ENCODE measurements at regions of chr17 and their contacts with region 1.

Region 1: GRCh38 chr17:60599620-60600489 is at the start of gene PPM1D:
- DNase-seq: peak; percentile 99
- total RNA-seq, gene PPM1D: 6.2 TPM

Region 2: GRCh38 chr17:60652454-60653247 is 52.8 kb after region 1 on chr17:
- intact Hi-C with region 1: no loop called
- DNase-seq: no peak

Region 3: DNA sequence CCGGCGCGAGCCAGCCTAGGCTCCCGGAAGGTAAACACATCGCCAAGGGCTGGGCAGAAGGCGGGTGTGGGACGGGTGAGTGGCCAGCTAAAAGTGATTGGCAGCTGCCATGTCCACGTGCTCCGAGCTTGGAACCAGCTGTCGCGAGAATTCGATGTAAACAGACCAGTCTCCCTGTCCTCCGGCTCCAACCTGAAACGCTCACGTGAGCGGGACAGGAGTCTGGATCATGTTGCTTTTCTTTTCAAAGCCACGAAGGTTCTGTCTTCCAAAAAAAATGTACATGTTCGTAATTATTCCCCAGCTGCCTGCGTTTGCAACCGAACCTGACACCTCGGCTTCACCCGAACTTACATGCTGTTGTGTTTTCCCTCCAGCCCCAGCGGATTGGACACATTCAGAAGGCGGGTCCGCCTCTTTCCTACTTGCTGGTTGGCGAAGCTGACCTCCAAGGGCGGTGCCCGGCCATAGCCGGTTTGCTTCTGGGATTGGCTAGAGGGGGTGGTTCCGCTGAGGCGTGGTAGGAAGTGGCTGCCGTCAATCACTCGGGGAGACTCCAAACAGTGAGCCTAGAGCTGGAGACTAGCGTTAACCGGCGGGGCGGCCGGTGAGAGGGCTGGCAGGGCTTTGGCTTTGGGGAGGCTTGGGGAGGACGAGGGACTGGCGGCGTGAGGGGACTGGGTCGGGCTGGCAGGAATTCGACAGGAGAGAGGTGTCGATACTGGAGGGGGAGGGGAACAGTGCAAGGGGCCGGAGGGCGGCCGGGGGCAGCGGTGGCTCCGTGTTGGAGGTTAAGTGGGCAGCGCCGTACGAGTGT is 77.7 kb after region 1 on chr17 and contains the start of gene BCAS3:
- intact Hi-C with region 1: loop called (anchors 5 kb)
- DNase-seq: peak; percentile 100
- total RNA-seq, gene BCAS3: 14.8 TPM